HepG2 (cell line): ENCODE measurements at regions of chrX and their contacts with region 1.

Region 1: DNA sequence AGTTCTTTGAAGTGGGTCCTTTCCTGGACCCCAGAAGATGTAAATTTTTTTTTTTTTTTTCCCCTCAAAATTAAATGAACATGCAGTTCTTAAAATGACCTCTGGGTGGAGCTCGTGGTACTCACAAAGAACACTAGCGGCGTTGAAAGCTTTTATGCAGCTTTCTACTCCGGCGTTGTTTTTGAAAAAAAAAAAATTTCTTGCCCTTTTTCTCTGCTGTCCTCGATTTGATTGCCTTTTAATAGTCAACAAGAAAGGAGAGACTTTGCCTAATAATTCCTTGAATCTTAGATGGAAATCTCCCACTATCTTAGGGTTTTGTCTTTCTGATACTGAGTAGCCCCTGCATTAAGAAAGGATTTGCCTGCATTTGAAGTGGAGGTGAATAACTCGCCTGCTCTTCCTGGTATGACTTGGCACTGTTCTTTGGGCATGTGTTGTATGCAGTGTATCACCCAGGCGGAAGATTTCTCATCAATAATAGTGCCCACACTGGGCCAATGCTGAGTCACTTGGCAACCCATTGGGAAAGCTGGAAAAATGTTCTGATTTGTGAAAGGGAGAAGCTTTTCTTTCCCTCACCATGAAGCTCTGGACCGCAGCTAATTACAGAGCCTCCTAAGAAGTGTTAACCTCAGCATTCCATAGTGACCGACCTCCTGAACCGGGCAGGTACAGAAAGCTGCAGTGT is 104.0 kb downstream of the PHEX start:
- DNase-seq: peak; percentile 11
- ATAC-seq: no peak
- H3K4me3 ChIP-seq: no peak overlapping the region
- H3K27ac ChIP-seq: no peak overlapping the region
- H3K4me1 ChIP-seq: peaks cover 10% of the 10 kb centered on the region; the same call in 1 of the 2 replicates
- H3K27me3 ChIP-seq: no peaks in the 10 kb centered on the region
- CTCF ChIP-seq: peak; percentile 40
- EP300 ChIP-seq: no peak
- POLR2A ChIP-seq: no peak
- RAD21 ChIP-seq: no peak

Region 2: DNA sequence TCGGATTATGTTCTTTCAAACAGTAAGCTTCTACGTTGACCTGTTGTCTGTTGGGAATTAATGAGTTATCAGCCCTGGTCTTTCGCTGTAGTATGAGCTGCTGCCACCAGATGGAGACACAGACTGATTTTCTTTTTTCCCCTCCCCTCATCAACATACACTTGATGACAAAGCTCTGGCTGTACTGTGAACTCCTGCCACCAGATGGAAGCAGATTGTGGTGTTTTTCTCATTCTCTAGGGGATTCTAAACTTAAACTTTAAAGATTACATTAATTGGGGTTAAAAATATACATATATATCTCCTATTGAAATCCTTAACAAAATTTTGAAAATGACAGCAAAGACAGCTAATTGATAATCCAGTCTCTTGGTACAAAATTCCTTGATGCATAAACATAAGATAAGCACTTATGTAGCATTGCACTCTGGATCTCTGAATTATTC is 150.8 kb before region 1 on chrX:
- CTCF ChIA-PET with region 1: interaction called, 4 read pairs
- POLR2A ChIA-PET with region 1: no interaction called
- in situ Hi-C with region 1: no loop called
- intact Hi-C with region 1: loop called (anchors 5 kb)
- DNase-seq: peak; percentile 62
- ATAC-seq: peak; percentile 91
- H3K4me3 ChIP-seq: no peak overlapping the region
- H3K27ac ChIP-seq: no peak overlapping the region
- H3K4me1 ChIP-seq: no peaks in the 10 kb centered on the region
- H3K27me3 ChIP-seq: no peaks in the 10 kb centered on the region
- CTCF ChIP-seq: peak; percentile 84
- EP300 ChIP-seq: no peak
- POLR2A ChIP-seq: no peak
- RAD21 ChIP-seq: peak; percentile 51

Region 3: DNA sequence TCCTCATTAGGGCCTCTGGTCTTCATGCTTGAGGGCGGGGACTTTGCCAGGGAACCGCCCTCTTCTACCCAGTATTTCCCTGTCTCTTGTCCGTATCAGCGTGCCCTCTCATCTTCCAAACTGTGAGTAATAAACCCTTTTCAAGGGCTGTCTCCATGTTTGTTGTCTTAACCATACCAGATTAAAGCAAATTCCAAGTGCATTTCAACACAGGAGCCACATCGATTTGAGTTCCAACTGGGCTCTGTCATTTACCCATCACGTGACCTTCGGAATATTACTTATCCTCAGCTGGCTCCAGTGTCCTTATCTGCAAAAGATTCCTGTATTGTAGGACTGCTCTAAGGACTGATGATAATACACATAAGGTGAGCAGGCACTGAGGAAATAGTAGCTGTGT is 110.4 kb before region 1 on chrX:
- CTCF ChIA-PET with region 1: no interaction called
- POLR2A ChIA-PET with region 1: no interaction called
- in situ Hi-C with region 1: no loop called
- intact Hi-C with region 1: no loop called
- DNase-seq: peak; percentile 46
- ATAC-seq: peak; percentile 80
- H3K4me3 ChIP-seq: no peak overlapping the region
- H3K27ac ChIP-seq: peak overlapping the region; percentile 30
- H3K4me1 ChIP-seq: peaks cover 13% of the 10 kb centered on the region; the same call in 1 of the 2 replicates
- H3K27me3 ChIP-seq: no peaks in the 10 kb centered on the region
- CTCF ChIP-seq: no peak
- EP300 ChIP-seq: no peak; a peak in 1 of 4 replicates
- POLR2A ChIP-seq: no peak
- RAD21 ChIP-seq: no peak

Region 4: GRCh38 chrX:22165732-22166457 is 29.8 kb after region 1 on chrX:
- CTCF ChIA-PET with region 1: no interaction called
- POLR2A ChIA-PET with region 1: no interaction called
- in situ Hi-C with region 1: no loop called
- intact Hi-C with region 1: no loop called
- DNase-seq: no peak
- ATAC-seq: no peak
- H3K4me3 ChIP-seq: no peak overlapping the region
- H3K27ac ChIP-seq: no peak overlapping the region
- H3K4me1 ChIP-seq: no peaks in the 10 kb centered on the region
- H3K27me3 ChIP-seq: no peaks in the 10 kb centered on the region
- CTCF ChIP-seq: no peak
- EP300 ChIP-seq: no peak
- POLR2A ChIP-seq: no peak
- RAD21 ChIP-seq: no peak

Region 5: DNA sequence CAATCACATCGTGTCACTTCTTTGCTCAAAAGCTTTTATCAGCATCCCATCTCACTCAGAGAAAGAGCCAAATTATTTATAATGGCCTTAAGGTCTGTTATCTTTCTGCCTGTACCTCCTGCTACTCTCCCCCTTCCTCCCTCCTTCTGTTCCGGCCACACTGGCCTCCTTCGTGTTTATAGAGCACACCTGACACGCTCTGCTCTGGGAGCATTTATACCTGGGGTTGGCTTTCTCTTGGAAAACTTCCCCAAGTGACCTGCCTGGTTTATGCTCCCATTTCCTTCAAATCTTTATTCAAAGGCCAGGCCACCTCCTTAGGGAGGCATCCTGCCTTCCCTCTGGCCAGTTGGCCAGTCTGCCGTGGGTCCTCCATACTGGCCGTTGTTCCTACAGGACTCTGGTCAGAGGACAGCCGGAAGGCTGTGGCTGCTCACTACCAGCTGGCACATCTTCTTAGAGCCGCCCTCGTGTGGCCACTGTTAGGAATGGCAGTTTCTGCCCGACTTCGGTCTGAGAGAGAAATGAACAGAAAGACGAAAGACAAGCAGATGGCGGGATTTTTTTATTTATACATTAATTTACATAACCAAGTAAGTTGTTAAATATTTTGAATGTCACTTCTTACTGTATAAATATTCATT is 56.4 kb after region 1 on chrX:
- CTCF ChIA-PET with region 1: interaction called, 3 read pairs
- POLR2A ChIA-PET with region 1: no interaction called
- in situ Hi-C with region 1: no loop called
- intact Hi-C with region 1: loop called (anchors 1 kb)
- DNase-seq: peak; percentile 38
- ATAC-seq: peak; percentile 98
- H3K4me3 ChIP-seq: no peak overlapping the region
- H3K27ac ChIP-seq: no peak overlapping the region
- H3K4me1 ChIP-seq: no peaks in the 10 kb centered on the region
- H3K27me3 ChIP-seq: no peaks in the 10 kb centered on the region
- CTCF ChIP-seq: peak; percentile 77
- EP300 ChIP-seq: no peak
- POLR2A ChIP-seq: no peak
- RAD21 ChIP-seq: peak; percentile 54; the same call in 1 of the 2 replicates

Region 6: GRCh38 chrX:22748093-22748999 is 612.2 kb after region 1 on chrX:
- CTCF ChIA-PET with region 1: interaction called, 8 read pairs
- POLR2A ChIA-PET with region 1: no interaction called
- in situ Hi-C with region 1: loop called (anchors 10 kb)
- intact Hi-C with region 1: no loop called
- DNase-seq: peak; percentile 13
- ATAC-seq: peak; percentile 81
- H3K4me3 ChIP-seq: no peak overlapping the region
- H3K27ac ChIP-seq: no peak overlapping the region
- H3K4me1 ChIP-seq: no peaks in the 10 kb centered on the region
- H3K27me3 ChIP-seq: no peaks in the 10 kb centered on the region
- CTCF ChIP-seq: peak; percentile 63
- EP300 ChIP-seq: no peak
- POLR2A ChIP-seq: no peak
- RAD21 ChIP-seq: no peak

Region 7: DNA sequence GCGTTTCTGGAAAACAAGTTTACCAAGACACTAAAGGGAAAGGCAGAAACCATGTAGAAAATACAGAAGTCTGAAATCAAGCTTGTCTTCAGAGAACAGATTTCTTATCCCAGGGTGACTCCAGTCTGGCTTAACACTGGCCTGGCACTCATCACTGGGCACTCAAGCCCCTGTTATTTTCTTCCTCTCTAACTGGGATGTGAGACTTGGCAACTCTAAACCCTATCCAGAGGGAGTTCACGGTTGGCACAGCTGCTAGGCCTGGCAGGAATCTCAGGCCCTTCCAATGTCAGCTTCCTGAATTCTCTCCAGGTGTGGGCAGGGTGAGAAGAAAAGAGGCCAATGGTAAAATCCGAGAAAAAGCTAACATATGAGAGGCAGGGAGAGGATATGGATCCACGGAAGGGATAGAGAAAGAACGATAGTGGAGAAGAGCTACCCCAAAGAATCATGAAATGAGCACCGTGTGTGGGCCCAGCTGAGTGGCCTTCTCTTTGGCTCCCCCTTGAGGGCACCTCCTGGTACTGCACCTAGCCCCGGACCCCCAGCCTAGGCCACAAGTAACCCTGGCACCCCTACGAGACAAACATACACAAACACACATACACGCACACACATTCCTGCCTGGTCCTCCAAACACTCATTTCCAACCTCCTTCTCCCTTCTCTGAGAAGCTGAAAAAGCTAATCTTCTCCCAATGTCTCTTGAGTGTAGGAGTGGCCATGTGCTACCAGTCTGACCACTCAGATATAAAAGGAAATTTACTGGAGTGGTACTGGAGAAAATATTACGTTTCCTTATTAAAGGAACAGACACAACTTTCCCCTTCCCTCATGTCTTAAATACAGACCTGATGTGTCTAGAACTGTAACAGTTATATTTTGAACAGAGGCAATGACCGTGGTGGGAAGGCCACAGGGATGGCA is 1181.9 kb after region 1 on chrX:
- CTCF ChIA-PET with region 1: no interaction called
- POLR2A ChIA-PET with region 1: no interaction called
- in situ Hi-C with region 1: no loop called
- intact Hi-C with region 1: loop called (anchors 5 kb)
- DNase-seq: no peak
- ATAC-seq: peak; percentile 82
- H3K4me3 ChIP-seq: no peak overlapping the region
- H3K27ac ChIP-seq: no peak overlapping the region
- H3K4me1 ChIP-seq: no peaks in the 10 kb centered on the region
- H3K27me3 ChIP-seq: no peaks in the 10 kb centered on the region
- CTCF ChIP-seq: peak; percentile 62
- EP300 ChIP-seq: no peak
- POLR2A ChIP-seq: no peak
- RAD21 ChIP-seq: no peak